SK-N-SH (cell line): ENCODE measurements at regions of chr20 and their contacts with region 1.

Region 1: GRCh38 chr20:3781153-3781910 is at the start of gene SPEF1:
- DNase-seq: peak; percentile 95
- H3K4me3 ChIP-seq: peak within 1 kb of the TSS; percentile 51 to 68
- H3K27ac ChIP-seq: peak within 1 kb of the TSS in 1 of 2 experiments; percentile 28; a peak in 2 of 4 replicates
- H3K4me1 ChIP-seq: peaks cover 20 to 38% of the 10 kb centered on the region in 2 experiments; a peak in 3 of 4 replicates
- H3K27me3 ChIP-seq: no peaks in the 10 kb centered on the region
- CTCF ChIP-seq: peak; percentile 68
- EP300 ChIP-seq: no peak
- RAD21 ChIP-seq: peak; percentile 60
- polyA plus RNA-seq, gene SPEF1: 1.6 and 1.8 TPM in 2 replicates

Region 2: GRCh38 chr20:3767427-3768341 is 13.6 kb before region 1 on chr20 and contains the start of gene ADISSP:
- CTCF ChIA-PET with region 1: interaction called, 27 read pairs
- POLR2A ChIA-PET with region 1: interaction called, 18 read pairs
- DNase-seq: peak; percentile 99
- H3K4me3 ChIP-seq: peak within 1 kb of the TSS; percentile 83 to 93
- H3K27ac ChIP-seq: peak within 1 kb of the TSS; percentile 94 to 95
- H3K4me1 ChIP-seq: peaks cover 9 to 22% of the 10 kb centered on the region in 2 experiments; a peak in 3 of 4 replicates
- H3K27me3 ChIP-seq: no peaks in the 10 kb centered on the region
- CTCF ChIP-seq: peak; percentile 28
- EP300 ChIP-seq: no peak
- RAD21 ChIP-seq: no peak
- polyA plus RNA-seq, gene ADISSP: 59.9 and 73.9 TPM in 2 replicates

Region 3: DNA sequence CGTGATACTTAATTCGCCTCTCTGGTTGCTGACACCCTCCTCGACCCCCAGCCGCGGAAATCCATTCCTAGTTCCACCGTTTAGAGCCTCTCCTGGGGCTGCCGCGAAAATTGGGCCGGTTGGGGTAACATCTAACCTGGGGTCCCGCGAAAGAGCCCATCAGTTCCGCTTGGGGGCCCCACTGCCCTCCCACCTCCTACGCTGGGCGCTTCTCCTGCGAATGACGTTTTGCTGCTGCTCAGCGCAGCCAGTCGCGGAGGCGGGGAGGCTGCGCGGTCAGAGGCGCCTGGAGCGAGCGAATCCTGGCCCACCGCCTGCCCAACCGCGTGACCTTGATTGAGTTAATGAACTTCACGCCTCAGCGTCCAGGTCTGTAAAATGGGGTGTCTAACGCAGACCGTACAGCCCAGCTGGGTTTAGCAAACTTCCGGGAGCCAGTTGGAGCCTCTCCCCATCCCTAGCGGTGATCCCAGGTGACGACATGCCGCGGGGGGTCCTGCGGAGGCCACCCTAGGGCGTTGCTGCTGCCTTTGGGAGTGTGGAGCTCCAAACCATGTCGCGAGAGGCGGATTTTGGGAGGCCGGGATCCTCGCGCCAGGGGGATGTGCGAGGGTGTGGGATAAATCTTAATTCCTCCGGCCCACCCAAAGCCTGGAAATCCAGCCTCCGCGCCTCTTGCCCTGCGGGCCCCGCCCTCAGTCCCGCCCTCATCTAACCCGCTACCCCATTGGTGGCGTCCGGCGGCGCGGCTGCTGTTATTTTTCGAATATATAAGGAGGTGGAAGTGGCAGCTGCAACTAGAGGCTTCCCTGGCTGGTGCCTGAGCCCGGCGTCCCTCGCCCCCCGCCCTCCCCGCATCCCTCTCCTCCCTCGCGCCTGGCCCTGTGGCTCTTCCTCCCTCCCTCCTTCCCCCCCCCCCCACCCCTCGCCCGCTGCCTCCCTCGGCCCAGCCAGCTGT is 14.5 kb after region 1 on chr20 and contains the start of gene CDC25B:
- CTCF ChIA-PET with region 1: interaction called, 23 read pairs
- POLR2A ChIA-PET with region 1: interaction called, 3 read pairs
- DNase-seq: peak; percentile 96
- H3K4me3 ChIP-seq: peak within 1 kb of the TSS; percentile 72 to 80
- H3K27ac ChIP-seq: peak within 1 kb of the TSS; percentile 91 to 96
- H3K4me1 ChIP-seq: peaks cover 17 to 41% of the 10 kb centered on the region in 2 experiments; a peak in 3 of 4 replicates
- H3K27me3 ChIP-seq: no peaks in the 10 kb centered on the region
- CTCF ChIP-seq: peak; percentile 50
- EP300 ChIP-seq: no peak
- RAD21 ChIP-seq: peak; percentile 43
- polyA plus RNA-seq, gene CDC25B: 41.5 and 56.5 TPM in 2 replicates